Naive thymus-derived CD4-positive, alpha-beta T cell (primary cell): ENCODE measurements at regions of chr4 and their contacts with region 1.

Region 1: DNA sequence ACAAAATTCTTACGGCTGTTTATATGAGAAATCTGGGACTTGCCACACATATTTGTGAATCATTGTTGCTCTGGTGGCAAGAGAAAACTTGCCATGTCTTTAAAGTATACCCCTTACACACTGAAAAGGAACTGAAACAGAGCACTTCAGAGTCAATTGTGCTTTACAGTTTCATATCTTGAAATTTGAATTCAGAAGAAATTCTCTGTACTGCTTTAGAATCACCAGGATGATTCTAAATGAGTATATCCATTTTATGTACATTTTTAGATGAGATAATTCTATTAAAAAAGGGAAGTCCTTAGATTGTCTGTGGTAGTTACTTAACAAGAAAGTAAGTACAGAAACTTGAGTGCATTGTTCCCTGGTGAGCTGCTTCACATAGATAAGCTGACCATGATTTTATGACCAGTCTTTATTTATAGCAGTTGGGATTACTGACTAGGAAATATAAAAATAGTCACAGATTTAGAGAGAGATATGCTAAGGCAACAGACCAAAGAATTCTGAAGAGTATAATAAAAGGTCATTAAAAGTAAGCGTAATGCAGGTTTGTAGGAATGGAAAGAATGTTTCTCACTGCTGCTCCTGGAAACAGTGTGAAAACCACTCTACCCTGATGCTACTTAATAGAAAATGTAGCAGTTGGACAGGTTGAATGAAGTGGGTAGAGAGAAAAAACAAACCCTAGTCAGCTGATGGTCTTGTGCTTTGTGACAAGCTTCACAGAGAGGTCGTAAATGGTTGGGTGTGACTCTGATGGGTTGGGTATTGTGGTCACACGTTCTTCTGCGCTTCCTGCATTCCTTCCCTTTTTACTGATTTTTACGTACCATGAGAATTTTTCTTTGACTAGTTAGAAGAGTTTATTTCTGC is 41.0 kb downstream of the FNIP2 start:
- DNase-seq: peak in 6 of 9 donors; percentile 28 to 51 (median 47)
- ATAC-seq: peak; percentile 84
- H3K4me3 ChIP-seq: no peak overlapping the region
- H3K4me3 Mint-ChIP-seq: peak overlapping the region; percentile 62 to 88 (median 75)
- H3K27ac ChIP-seq: peak overlapping the region; percentile 35
- H3K27ac Mint-ChIP-seq: peak overlapping the region; percentile 71 to 87 (median 82)
- H3K4me1 ChIP-seq: peaks cover 4 to 30% of the 10 kb centered on the region in 2 donors
- H3K4me1 Mint-ChIP-seq: peaks cover 31 to 58% (median 44%) of the 10 kb centered on the region in 7 donors
- H3K27me3 ChIP-seq: no peaks in the 10 kb centered on the region
- H3K27me3 Mint-ChIP-seq: no peaks in the 10 kb centered on the region

Region 2: DNA sequence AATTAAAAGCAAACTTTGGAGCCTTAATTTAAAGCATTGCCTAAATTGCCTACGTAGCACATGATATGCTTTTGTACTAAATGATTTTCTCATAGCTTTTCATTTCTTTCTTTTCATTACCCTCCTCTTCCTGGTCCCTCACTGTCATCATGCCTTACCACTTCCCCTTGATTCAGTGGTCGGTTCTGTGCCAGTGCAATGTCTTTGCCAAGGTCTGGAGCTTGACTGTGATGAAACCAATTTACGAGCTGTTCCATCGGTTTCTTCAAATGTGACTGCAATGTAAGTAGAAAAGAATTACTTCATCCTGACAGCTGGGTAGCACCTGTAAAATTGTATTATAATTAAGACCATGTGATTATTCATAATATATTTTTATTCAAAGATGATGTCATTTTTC is 210.7 kb before region 1 on chr4:
- CTCF ChIA-PET with region 1: no interaction called
- POLR2A ChIA-PET with region 1: no interaction called
- intact Hi-C with region 1: no loop called
- DNase-seq: no peak
- ATAC-seq: peak; percentile 54
- H3K4me3 ChIP-seq: no peak overlapping the region
- H3K4me3 Mint-ChIP-seq: no peak overlapping the region
- H3K27ac ChIP-seq: no peak overlapping the region
- H3K27ac Mint-ChIP-seq: no peak overlapping the region
- H3K4me1 ChIP-seq: no peaks in the 10 kb centered on the region
- H3K4me1 Mint-ChIP-seq: no peaks in the 10 kb centered on the region
- H3K27me3 ChIP-seq: peaks cover 0 to 3% of the 10 kb centered on the region in 2 donors
- H3K27me3 Mint-ChIP-seq: peaks cover 24 to 38% (median 26%) of the 10 kb centered on the region in 5 donors

Region 3: DNA sequence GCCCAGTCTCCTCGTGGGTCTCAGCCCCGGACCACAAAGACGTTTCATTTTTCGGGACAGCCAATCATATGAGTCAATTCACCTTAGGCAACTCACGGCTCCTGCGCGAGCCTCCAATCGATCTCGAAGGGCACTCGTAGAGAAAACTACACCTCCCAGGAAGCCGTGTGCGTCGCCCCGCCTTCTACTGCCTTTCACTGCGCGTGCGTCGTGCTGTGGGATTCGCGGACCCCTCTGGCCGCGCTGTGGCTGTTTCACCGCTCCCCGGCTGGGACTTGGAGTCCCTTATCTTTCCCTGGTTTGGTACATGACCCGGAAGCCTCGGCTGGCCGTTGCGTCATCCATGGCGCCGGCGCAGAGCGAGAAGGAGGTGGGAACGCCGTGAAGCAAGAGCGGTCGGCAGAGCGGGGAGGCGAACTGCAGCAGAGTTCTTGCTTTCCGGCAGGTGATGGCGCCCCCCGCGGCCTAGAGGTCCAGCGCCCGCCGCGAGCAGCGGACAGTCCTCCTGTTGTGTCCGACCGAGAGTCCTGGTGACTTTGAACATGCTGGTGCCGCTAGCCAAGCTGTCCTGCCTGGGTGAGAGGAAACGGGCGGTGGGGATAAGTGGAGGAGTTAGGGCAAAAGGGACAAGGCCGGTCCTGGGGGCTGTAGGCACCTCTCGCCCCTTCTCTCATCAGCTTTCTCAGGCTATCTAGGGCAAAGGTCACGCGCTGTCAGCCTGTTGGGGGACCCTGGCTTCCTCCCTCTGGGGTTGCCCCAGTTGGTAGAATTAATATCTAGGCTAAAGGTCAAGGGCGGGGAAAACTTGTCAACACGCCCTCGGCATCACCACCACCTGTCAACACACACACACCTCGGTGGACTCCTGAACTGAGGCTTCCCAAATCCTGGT is 137.7 kb before region 1 on chr4 and contains the start of gene ETFDH:
- CTCF ChIA-PET with region 1: no interaction called
- POLR2A ChIA-PET with region 1: interaction called, 3 read pairs
- intact Hi-C with region 1: loop called in 1 of 2 experiments (anchors 1 kb)
- DNase-seq: peak; percentile 91 to 99 (median 98)
- ATAC-seq: peak; percentile 88
- H3K4me3 ChIP-seq: peak within 1 kb of the TSS; percentile 80
- H3K4me3 Mint-ChIP-seq: peak within 1 kb of the TSS; percentile 88 to 99 (median 96)
- H3K27ac ChIP-seq: peak within 1 kb of the TSS; percentile 93
- H3K27ac Mint-ChIP-seq: peak within 1 kb of the TSS; percentile 91 to 99 (median 97)
- H3K4me1 ChIP-seq: peaks cover 13 to 16% of the 10 kb centered on the region in 2 donors
- H3K4me1 Mint-ChIP-seq: peaks cover 6 to 43% (median 35%) of the 10 kb centered on the region in 7 donors
- H3K27me3 ChIP-seq: no peaks in the 10 kb centered on the region
- H3K27me3 Mint-ChIP-seq: peaks cover 0 to 3% (median 0%) of the 10 kb centered on the region in 5 donors
- total RNA-seq, gene ETFDH: 12.5 to 25.8 (median 17.5) TPM

Region 4: DNA sequence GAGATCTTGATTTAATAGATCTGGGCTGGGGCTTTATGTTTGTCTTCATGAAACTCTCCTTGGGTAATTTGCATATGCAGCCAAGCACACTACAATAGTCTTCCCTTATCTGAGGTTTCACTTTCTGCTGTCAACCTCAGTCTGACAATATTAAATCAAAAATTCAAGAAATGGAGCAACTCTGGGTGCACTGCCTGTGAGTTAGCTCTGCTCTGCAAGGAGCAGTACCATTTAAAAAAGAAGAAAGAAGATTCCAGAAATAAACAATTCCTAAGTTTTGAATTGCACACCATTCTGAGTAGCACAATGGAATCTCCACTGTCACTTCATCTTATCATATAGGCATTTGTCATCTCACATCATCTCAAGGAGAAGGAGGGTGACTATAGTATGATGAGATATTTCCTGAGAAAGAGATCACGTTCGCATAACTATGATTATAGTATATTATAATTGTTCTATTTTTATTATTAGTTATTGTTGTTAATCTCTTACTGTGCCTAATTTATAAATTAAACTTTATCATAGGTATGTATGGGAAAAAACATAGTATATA is 31.6 kb before region 1 on chr4:
- CTCF ChIA-PET with region 1: no interaction called
- POLR2A ChIA-PET with region 1: interaction called, 3 read pairs
- intact Hi-C with region 1: loop called in 1 of 2 experiments (anchors 2 kb)
- DNase-seq: peak in 4 of 9 donors; percentile 9 to 16 (median 12)
- ATAC-seq: peak; percentile 84
- H3K4me3 ChIP-seq: peak overlapping the region; percentile 26
- H3K4me3 Mint-ChIP-seq: peak overlapping the region; percentile 10 to 85 (median 73)
- H3K27ac ChIP-seq: no peak overlapping the region
- H3K27ac Mint-ChIP-seq: peak overlapping the region; percentile 8 to 85 (median 40)
- H3K4me1 ChIP-seq: peaks cover 0 to 5% of the 10 kb centered on the region in 2 donors
- H3K4me1 Mint-ChIP-seq: peaks cover 24 to 52% (median 51%) of the 10 kb centered on the region in 7 donors
- H3K27me3 ChIP-seq: no peaks in the 10 kb centered on the region
- H3K27me3 Mint-ChIP-seq: no peaks in the 10 kb centered on the region

Region 5: GRCh38 chr4:158788516-158788915 is 21.3 kb before region 1 on chr4:
- CTCF ChIA-PET with region 1: no interaction called
- POLR2A ChIA-PET with region 1: no interaction called
- intact Hi-C with region 1: no loop called
- DNase-seq: no peak
- ATAC-seq: no peak
- H3K4me3 ChIP-seq: no peak overlapping the region
- H3K4me3 Mint-ChIP-seq: no peak overlapping the region
- H3K27ac ChIP-seq: no peak overlapping the region
- H3K27ac Mint-ChIP-seq: no peak overlapping the region
- H3K4me1 ChIP-seq: no peaks in the 10 kb centered on the region
- H3K4me1 Mint-ChIP-seq: peaks cover 10 to 24% (median 17%) of the 10 kb centered on the region in 7 donors
- H3K27me3 ChIP-seq: no peaks in the 10 kb centered on the region
- H3K27me3 Mint-ChIP-seq: peaks cover 0 to 3% (median 0%) of the 10 kb centered on the region in 5 donors

Region 6: DNA sequence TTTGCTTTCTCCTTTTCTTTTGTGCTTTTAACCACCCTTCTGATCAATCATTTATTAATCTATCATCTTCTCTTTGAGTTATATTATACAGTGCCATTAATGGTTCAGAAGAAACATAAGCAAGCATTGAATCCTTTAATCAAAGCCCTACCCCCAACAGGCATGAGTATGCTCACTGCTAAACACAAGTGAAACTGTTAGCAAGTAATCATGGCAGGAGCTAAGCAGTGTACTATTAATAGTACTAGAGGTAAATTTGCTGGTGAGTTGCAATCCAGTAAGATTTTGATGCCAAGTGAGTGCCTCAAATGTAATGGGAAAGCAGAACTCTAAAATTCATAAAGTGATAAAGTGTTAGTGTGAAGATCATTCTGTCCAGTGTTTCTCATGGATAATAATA is 16.2 kb after region 1 on chr4:
- CTCF ChIA-PET with region 1: no interaction called
- POLR2A ChIA-PET with region 1: interaction called, 4 read pairs
- intact Hi-C with region 1: loop called in 1 of 2 experiments (anchors 2 kb)
- DNase-seq: no peak
- ATAC-seq: no peak
- H3K4me3 ChIP-seq: no peak overlapping the region
- H3K4me3 Mint-ChIP-seq: peak overlapping the region in 7 of 10 donors; percentile 1 to 82 (median 42)
- H3K27ac ChIP-seq: no peak overlapping the region
- H3K27ac Mint-ChIP-seq: peak overlapping the region in 8 of 9 donors; percentile 22 to 86 (median 48)
- H3K4me1 ChIP-seq: peaks cover 0 to 24% of the 10 kb centered on the region in 2 donors
- H3K4me1 Mint-ChIP-seq: peaks cover 20 to 64% (median 37%) of the 10 kb centered on the region in 7 donors
- H3K27me3 ChIP-seq: no peaks in the 10 kb centered on the region
- H3K27me3 Mint-ChIP-seq: no peaks in the 10 kb centered on the region